Lower leg skin (tissue), 4 donors: ENCODE measurements at regions of chr5 and their contacts with region 1.

Region 1: GRCh38 chr5:30343707-30344106 is 849.8 kb upstream of the CDH6 start:
- DNase-seq: no peak
- H3K4me3 ChIP-seq: no peak overlapping the region
- CTCF ChIP-seq: no peak
- POLR2A ChIP-seq: no peak

Region 2: GRCh38 chr5:28984642-28985041 is 1359.1 kb before region 1 on chr5:
- intact Hi-C with region 1: no loop called
- DNase-seq: no peak
- H3K4me3 ChIP-seq: no peak overlapping the region
- CTCF ChIP-seq: no peak
- POLR2A ChIP-seq: no peak

Region 3: GRCh38 chr5:30447431-30447830 is 103.7 kb after region 1 on chr5:
- intact Hi-C with region 1: no loop called
- DNase-seq: no peak
- H3K4me3 ChIP-seq: no peak overlapping the region
- CTCF ChIP-seq: no peak
- POLR2A ChIP-seq: no peak

Region 4: GRCh38 chr5:30605693-30606268 is 262.1 kb after region 1 on chr5:
- intact Hi-C with region 1: no loop called
- DNase-seq: no peak
- H3K4me3 ChIP-seq: no peak overlapping the region
- CTCF ChIP-seq: no peak
- POLR2A ChIP-seq: no peak

Region 5: GRCh38 chr5:30832519-30832918 is 488.8 kb after region 1 on chr5:
- intact Hi-C with region 1: loop called (anchors 5 kb)
- DNase-seq: no peak
- H3K4me3 ChIP-seq: no peak overlapping the region
- CTCF ChIP-seq: no peak
- POLR2A ChIP-seq: no peak